A673 (cell line): ENCODE measurements at regions of chr19 and their contacts with region 1.

Region 1: DNA sequence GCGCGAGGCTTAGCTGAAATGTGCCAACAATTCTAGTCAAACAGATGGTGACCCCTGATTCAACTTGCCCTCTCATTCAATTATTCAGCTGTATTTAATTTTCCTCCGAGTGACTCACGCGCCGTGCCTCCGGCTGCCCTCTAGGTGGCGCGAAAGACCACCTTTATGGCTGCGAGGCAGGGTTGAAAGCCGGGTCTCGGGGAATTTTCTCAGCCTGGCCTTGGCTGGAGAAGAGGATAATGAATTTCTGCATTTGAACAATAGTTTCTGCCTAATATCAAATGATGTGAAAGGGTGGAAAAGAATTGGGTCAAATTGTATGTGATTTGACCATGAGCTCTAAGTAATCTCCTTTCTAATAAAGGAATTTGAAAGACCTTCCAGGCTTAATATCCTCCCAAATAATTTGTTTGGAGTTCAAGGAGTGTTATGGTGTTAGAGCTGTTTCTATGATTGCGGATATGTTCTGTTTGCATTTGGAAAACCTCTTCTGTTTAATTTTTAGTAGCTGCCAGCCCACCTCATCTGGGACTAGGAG is 310.9 kb downstream of the ZNF536 start:
- DNase-seq: peak; percentile 86
- H3K4me3 ChIP-seq: no peak overlapping the region
- H3K27ac ChIP-seq: no peak overlapping the region
- H3K4me1 ChIP-seq: peaks cover 28% of the 10 kb centered on the region
- H3K27me3 ChIP-seq: no peaks in the 10 kb centered on the region
- CTCF ChIP-seq: peak; percentile 98

Region 2: GRCh38 chr19:30602661-30603350 is 80.3 kb before region 1 on chr19:
- CTCF ChIA-PET with region 1: no interaction called
- POLR2A ChIA-PET with region 1: no interaction called
- intact Hi-C with region 1: no loop called
- DNase-seq: no peak
- H3K4me3 ChIP-seq: no peak overlapping the region
- H3K27ac ChIP-seq: no peak overlapping the region
- H3K4me1 ChIP-seq: no peaks in the 10 kb centered on the region
- H3K27me3 ChIP-seq: no peaks in the 10 kb centered on the region
- CTCF ChIP-seq: no peak

Region 3: GRCh38 chr19:30784850-30785457 is 101.9 kb after region 1 on chr19:
- CTCF ChIA-PET with region 1: no interaction called
- POLR2A ChIA-PET with region 1: no interaction called
- intact Hi-C with region 1: loop called (anchors 5 kb)
- DNase-seq: peak; percentile 79
- H3K4me3 ChIP-seq: no peak overlapping the region
- H3K27ac ChIP-seq: no peak overlapping the region
- H3K4me1 ChIP-seq: peaks cover 17% of the 10 kb centered on the region
- H3K27me3 ChIP-seq: no peaks in the 10 kb centered on the region
- CTCF ChIP-seq: peak; percentile 88

Region 4: DNA sequence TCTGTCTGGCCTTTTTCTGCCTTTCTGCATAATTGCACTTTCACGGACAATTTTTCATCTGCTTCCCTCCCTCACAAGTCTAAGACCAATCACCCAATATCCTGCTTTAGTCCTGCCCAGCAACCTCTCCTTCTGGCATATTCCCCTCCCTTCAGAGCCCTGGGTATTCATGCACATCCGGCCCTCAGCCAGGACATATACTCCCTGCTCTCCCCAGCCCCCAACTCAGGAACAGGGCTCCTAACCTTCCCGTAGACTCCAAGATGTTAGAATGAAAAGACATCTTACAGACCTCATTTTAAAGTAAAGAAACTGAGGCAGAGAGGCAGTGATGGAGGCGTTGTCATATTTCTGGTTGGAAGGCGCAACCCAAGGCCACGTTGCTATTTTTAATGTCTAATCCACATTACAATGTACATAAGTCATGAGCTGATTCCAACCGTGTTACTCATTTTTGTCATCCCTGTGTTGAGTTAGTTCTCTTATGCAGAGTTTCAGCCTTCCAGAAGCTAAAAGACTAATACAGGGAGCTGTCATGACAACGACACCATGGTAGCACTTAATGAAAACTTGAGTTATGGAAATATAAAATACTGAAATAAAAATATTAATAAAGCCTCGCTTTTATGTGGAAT is 456.9 kb after region 1 on chr19:
- CTCF ChIA-PET with region 1: no interaction called
- POLR2A ChIA-PET with region 1: no interaction called
- intact Hi-C with region 1: loop called (anchors 10 kb)
- DNase-seq: peak; percentile 9
- H3K4me3 ChIP-seq: no peak overlapping the region
- H3K27ac ChIP-seq: no peak overlapping the region
- H3K4me1 ChIP-seq: peaks cover 15% of the 10 kb centered on the region
- H3K27me3 ChIP-seq: no peaks in the 10 kb centered on the region
- CTCF ChIP-seq: no peak

Region 5: GRCh38 chr19:32224371-32225244 is 1541.5 kb after region 1 on chr19:
- CTCF ChIA-PET with region 1: interaction called, 13 read pairs
- POLR2A ChIA-PET with region 1: no interaction called
- intact Hi-C with region 1: loop called (anchors 1 kb)
- DNase-seq: peak; percentile 51
- H3K4me3 ChIP-seq: peak overlapping the region; percentile 26
- H3K27ac ChIP-seq: no peak overlapping the region
- H3K4me1 ChIP-seq: peaks cover 10% of the 10 kb centered on the region
- H3K27me3 ChIP-seq: no peaks in the 10 kb centered on the region
- CTCF ChIP-seq: peak; percentile 89